ENCODE measurements at regions of chr15 and their contacts with region 1.

Region 1: DNA sequence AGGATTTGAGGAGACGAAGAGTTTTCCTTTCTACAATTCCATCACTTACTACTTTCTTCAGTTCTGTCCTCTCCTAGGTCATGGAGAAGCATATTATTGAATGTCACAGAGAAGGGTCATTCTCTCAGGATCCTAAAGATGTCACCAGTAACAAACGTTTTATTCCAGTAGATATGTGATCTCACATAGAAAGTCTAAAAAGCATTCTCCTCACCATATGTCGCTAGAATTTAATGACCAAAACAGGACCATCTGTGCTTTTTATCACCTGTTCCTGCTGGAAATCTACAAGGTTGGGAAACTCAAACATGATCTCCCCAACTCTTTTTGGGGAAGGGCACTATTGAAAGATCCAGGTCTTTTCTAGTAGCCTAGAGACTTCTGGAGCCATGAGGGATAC is 24.0 kb upstream of the FRMD5 start:
- DNase-seq: no peak
- H3K4me3 ChIP-seq: no peak overlapping the region
- H3K27ac ChIP-seq: no peak overlapping the region
- H3K4me1 ChIP-seq: peaks cover 0 to 6% (median 0%) of the 10 kb centered on the region in 4 experiments
- H3K27me3 ChIP-seq: peaks cover 0 to 8% (median 2%) of the 10 kb centered on the region in 5 experiments

Region 2: GRCh38 chr15:42973114-42973513 is 1246.0 kb before region 1 on chr15:
- CTCF ChIA-PET with region 1: no interaction called
- POLR2A ChIA-PET with region 1: no interaction called
- DNase-seq: no peak
- H3K4me3 ChIP-seq: no peak overlapping the region
- H3K27ac ChIP-seq: no peak overlapping the region
- H3K4me1 ChIP-seq: no peaks in the 10 kb centered on the region
- H3K27me3 ChIP-seq: no peaks in the 10 kb centered on the region

Region 3: DNA sequence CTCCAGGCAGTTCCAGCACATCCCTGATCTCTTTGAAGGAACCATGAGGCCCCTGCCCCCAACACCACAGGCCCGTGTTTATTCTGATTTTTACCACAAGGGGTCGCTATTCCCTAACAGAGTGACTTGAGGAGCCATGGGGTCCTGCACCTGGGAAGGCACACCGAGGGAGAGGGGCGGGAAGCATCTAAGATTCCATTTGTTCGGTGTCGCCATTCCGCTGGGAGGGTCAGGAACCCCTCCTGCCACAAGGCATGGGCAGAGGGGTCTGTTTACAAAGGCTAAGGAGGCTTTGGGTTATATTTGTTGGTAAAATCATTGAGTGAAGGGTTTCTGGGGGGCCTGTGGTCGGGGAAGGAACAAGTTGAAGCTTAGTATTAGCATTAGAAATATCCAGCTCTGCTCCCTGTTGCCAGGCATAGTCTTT is 315.2 kb before region 1 on chr15:
- CTCF ChIA-PET with region 1: interaction called, 11 read pairs
- POLR2A ChIA-PET with region 1: no interaction called
- DNase-seq: peak; percentile 61 to 79 (median 70)
- H3K4me3 ChIP-seq: peak overlapping the region in 2 of 7 experiments; percentile 2 to 11
- H3K27ac ChIP-seq: no peak overlapping the region
- H3K4me1 ChIP-seq: peaks cover 0 to 12% (median 2%) of the 10 kb centered on the region in 4 experiments
- H3K27me3 ChIP-seq: no peaks in the 10 kb centered on the region

Region 4: DNA sequence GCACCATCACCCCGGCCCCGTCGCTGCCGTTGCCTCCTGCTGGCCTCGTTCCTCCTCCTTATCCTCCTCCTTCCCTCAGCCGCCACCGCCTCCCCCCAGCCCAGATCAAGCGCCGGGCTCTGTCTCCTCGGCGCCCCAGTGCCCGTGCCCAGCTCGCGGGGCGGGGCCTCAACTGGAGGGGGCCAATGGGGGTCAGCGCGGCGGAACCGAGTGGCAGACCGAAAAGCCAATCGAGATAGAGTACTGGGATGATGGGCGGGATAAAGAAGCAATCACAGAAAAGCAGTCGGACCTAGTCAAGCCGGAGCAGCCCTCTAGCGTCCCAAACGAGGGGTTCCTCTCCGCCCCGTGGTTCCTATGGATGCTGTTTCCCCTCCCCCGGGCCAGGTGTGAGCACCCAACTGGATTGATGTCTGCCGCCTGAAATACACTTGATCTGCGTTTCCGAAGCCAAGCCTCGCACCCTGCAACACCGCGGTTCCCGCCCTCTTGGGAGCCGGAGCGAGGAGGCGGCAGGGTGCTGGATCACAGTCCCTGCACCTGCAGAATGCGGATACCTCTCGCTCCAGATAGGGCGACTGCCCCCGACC is 23.8 kb before region 1 on chr15 and contains the start of gene FRMD5:
- CTCF ChIA-PET with region 1: no interaction called
- POLR2A ChIA-PET with region 1: no interaction called
- DNase-seq: peak; percentile 86 to 92 (median 90)
- H3K4me3 ChIP-seq: peak within 1 kb of the TSS in 6 of 7 experiments; percentile 18 to 75 (median 40)
- H3K27ac ChIP-seq: no peak within 1 kb of the TSS
- H3K4me1 ChIP-seq: peaks cover 0 to 19% (median 5%) of the 10 kb centered on the region in 4 experiments
- H3K27me3 ChIP-seq: peaks cover 21 to 74% (median 35%) of the 10 kb centered on the region in 5 experiments

Region 5: DNA sequence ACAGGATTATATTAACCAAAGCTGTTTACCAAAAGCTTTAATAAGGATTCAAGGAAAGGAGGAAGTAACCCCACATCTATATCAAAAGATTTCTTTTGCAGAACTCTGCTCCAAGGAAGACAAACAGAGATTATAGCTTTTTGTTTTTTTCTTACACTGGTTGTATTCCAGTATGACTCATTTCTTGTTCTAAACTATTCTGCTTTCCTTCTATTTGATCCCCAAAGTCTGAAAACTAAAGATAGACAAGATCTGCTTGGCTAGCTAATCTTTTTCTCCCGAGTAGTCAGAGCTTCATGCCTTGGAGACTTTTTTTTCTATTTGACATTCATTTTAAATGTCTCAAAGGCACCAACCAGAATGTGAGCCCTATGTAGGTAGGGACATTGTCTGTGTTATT is 12.8 kb after region 1 on chr15:
- CTCF ChIA-PET with region 1: no interaction called
- POLR2A ChIA-PET with region 1: no interaction called
- DNase-seq: no peak
- H3K4me3 ChIP-seq: no peak overlapping the region
- H3K27ac ChIP-seq: no peak overlapping the region
- H3K4me1 ChIP-seq: no peaks in the 10 kb centered on the region
- H3K27me3 ChIP-seq: no peaks in the 10 kb centered on the region

Measured in common myeloid progenitor, CD34-positive (primary cell).